Cardiac septum (tissue), 1 donor: ENCODE measurements at regions of chr17 and their contacts with region 1.

Region 1: GRCh38 chr17:74748529-74749365 is at the start of gene NHERF1:
- DNase-seq: peak; percentile 98
- total RNA-seq, gene NHERF1: 10.1 TPM

Region 2: DNA sequence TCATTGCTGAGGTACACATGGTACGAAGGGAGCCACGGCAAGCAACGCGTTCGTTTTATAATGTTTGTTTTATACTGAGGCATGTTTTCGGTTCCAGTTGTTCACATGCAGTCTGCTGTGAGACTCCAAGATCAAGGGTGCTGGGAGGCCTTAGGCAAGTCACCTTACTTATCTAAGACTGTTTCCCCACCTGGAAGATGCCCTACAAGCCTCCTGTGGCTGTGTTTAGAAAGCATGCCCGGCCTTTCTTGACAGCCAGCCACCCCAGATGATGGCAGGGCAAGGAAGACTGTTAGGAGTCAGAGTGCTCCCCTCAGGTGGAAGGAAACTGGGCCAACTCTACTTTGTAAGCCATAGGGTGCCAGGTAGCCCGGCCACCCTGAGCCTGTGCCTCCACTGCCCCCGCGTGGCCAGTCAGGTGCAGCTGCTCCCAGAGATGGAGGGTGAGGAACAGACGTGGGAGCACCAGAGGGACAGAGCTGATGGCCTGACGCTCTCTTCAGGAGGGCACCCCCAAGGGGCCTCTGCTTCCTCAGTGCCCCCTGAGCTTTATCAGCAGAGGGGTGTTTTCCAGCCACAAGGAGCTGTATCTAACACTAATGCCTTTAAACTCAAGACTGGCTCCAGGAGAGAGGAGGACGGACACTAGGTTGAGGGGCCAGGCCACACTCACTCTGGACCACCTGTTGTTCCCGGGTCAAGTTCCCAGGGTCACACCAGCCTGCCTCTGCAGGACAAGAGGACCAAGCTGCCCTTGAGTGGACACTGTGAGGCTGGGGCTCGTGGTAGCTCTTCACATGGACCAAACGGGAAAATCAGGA is 22.0 kb after region 1 on chr17:
- intact Hi-C with region 1: loop called (anchors 1 kb)
- DNase-seq: peak; percentile 87

Region 3: DNA sequence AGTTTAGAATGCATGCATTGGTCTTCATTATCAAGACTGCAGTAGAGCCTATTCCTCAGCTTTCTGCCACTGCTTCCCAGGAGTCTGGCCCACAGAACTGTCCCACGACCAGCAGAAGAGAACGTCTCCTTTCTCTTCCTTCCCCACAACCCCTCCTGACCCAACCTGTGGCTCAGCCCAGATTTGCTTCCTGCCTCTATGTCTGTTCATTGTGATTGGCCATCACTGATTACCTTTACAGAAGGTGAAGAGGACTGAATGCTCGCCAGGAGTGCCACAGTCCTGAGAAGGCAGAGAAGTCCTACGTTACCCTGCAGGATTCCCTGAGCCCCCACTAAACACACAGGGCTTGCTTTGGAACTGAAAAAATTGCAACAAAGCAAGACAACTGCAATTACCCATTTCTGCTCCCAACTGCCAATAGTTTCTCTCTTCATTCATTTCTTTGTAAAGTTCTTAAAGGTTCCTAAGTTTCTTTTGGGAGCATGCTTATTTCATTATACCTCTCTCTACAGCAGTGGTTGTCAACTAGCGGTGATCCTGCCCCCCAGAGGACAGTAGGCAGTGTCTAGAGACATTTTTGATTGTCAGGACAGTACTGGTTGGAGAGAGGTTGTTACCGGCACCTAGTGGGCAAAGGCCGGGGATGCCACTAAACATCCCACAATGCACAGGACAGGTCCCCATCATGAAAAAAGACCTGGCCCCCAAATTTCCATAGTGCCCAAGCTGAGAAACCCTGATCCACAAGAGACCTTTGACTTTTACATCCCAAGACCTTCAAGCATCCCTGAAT is 31.9 kb after region 1 on chr17:
- intact Hi-C with region 1: loop called (anchors 5 kb)
- DNase-seq: no peak

Region 4: GRCh38 chr17:74864866-74865395 is 116.2 kb after region 1 on chr17:
- intact Hi-C with region 1: loop called (anchors 2 kb)
- DNase-seq: peak; percentile 89

Region 5: GRCh38 chr17:74961657-74962490 is 213.1 kb after region 1 on chr17:
- intact Hi-C with region 1: loop called (anchors 5 kb)
- DNase-seq: peak; percentile 90